Activated CD4-positive, alpha-beta T cell treated with anti-CD3 and anti-CD28 coated beads, Interleukin-2, amount 10 ng/mL, durations not matched to agents 7 days and 5 days (primary cell): ENCODE measurements at regions of chr2 and their contacts with region 1.

Region 1: DNA sequence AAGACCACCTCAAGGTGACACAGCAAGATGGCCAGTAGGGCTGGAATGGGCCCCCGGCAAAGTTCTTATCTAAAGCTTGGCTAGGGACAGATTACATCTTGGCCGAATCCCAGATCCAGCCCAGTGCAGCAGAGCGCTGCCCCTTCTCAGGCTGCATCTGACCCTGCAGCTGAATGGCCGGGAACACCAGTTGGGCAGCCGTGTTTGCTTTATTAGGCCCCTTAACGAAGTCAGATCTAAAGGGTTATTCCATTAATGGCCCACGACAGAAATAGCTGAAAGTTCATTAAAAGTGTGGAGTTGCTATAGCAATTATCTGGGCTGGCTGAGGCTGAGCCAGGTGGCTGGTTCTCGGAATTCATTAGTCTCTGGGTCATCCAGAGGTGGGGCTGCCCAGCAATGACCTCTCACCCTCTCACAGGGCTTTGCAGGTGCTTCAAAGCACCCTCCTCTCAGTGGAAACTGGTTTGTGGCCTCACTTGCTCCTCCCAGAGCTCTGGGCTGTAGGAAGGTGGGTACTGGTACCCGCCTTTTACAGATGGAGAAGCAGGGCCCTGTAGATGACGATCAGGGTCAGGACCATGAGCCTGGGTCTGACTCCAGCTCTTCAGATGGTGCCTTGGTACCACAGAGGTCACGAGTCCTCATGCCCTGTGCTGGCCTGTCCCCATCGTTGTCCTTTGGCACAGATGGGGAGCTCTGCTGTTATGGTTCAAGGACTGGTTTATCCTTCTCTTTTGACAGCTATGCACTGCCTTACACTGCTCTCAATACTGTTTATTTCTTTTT is 68.8 kb downstream of the EMX1 start:
- DNase-seq: no peak
- H3K4me3 Mint-ChIP-seq: no peak overlapping the region
- H3K27ac Mint-ChIP-seq: no peak overlapping the region
- H3K4me1 Mint-ChIP-seq: no peaks in the 10 kb centered on the region
- H3K27me3 Mint-ChIP-seq: no peaks in the 10 kb centered on the region

Region 2: GRCh38 chr2:72998234-72998651 is 12.2 kb after region 1 on chr2:
- CTCF ChIA-PET with region 1: interaction called, 10 read pairs
- POLR2A ChIA-PET with region 1: no interaction called
- DNase-seq: no peak
- H3K4me3 Mint-ChIP-seq: no peak overlapping the region
- H3K27ac Mint-ChIP-seq: no peak overlapping the region
- H3K4me1 Mint-ChIP-seq: no peaks in the 10 kb centered on the region
- H3K27me3 Mint-ChIP-seq: no peaks in the 10 kb centered on the region

Region 3: GRCh38 chr2:73134471-73134870 is 148.4 kb after region 1 on chr2:
- CTCF ChIA-PET with region 1: no interaction called
- POLR2A ChIA-PET with region 1: no interaction called
- DNase-seq: no peak
- H3K4me3 Mint-ChIP-seq: no peak overlapping the region
- H3K27ac Mint-ChIP-seq: no peak overlapping the region
- H3K4me1 Mint-ChIP-seq: no peaks in the 10 kb centered on the region
- H3K27me3 Mint-ChIP-seq: peaks cover 6% of the 10 kb centered on the region